Natural killer cell (primary cell): ENCODE measurements at regions of chr13 and their contacts with region 1.

Region 1: GRCh38 chr13:39612023-39612637 is 9.1 kb upstream of the LHFPL6 start:
- DNase-seq: peak in 1 of 2 donors; percentile 75
- ATAC-seq: peak in 1 of 3 donors; percentile 39
- H3K4me3 ChIP-seq: no peak overlapping the region
- H3K4me3 Mint-ChIP-seq: no peak overlapping the region
- H3K27ac ChIP-seq: no peak overlapping the region
- H3K27ac Mint-ChIP-seq: no peak overlapping the region
- H3K4me1 ChIP-seq: no peaks in the 10 kb centered on the region
- H3K4me1 Mint-ChIP-seq: no peaks in the 10 kb centered on the region
- H3K27me3 ChIP-seq: peaks cover 2% of the 10 kb centered on the region
- H3K27me3 Mint-ChIP-seq: peaks cover 3 to 7% of the 10 kb centered on the region in 2 donors
- CTCF ChIP-seq: peak; percentile 86

Region 2: DNA sequence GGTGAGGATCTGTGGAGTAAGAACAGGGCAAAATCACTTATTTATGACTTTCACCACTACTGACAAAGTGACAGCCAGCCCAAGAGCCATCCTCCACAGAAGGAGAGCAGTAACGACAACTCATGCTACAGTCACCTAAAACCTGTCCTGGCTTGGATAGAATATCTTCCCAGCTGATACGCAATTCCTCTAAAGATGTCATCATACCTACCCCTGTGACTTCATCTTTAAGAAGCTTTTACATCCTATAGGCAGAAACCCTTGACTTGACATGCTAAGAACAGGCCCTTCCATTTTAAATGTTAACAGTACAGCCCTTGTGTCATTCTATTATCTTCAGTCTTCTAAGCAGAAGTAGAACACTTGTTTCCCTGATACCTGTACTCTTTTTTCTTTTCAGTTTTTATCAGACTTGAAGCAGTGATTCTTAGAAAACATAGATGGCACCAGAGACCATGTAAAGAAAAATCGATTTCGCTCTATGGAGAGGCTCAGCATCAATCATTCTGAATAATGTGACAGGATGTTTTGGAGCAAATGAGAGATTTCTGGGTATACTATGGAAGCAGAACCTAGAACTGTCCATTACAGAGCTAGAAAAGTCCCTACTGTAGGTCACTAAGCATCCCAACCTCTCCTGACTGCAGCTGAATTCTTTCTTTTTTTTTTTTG is 641.6 kb before region 1 on chr13:
- intact Hi-C with region 1: loop called (anchors 5 kb)
- DNase-seq: peak in 1 of 2 donors; percentile 17
- ATAC-seq: no peak
- H3K4me3 ChIP-seq: no peak overlapping the region
- H3K4me3 Mint-ChIP-seq: no peak overlapping the region
- H3K27ac ChIP-seq: no peak overlapping the region
- H3K27ac Mint-ChIP-seq: no peak overlapping the region
- H3K4me1 ChIP-seq: no peaks in the 10 kb centered on the region
- H3K4me1 Mint-ChIP-seq: no peaks in the 10 kb centered on the region
- H3K27me3 ChIP-seq: no peaks in the 10 kb centered on the region
- H3K27me3 Mint-ChIP-seq: peaks cover 0 to 6% of the 10 kb centered on the region in 2 donors
- CTCF ChIP-seq: no peak

Region 3: DNA sequence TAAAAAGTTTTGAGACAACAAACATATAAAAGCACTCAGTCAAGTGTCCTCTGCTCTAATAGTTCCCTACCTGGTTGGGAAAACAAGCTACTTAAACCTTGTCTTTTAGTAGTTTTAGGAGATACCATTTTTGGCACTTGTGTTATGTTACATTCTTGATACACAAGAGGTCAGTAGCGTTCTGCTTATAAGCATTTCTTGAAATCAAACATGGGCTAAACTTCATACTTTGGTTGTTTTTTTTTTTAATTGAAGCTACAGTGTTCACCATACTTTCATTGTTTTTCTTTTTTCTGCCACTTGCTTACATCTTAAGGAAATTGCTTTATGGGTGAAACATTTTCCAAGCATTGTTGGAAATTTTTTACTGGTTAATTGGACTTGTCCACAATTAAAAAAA is 561.0 kb before region 1 on chr13:
- intact Hi-C with region 1: loop called (anchors 5 kb)
- DNase-seq: peak in 1 of 2 donors; percentile 54
- ATAC-seq: no peak
- H3K4me3 ChIP-seq: no peak overlapping the region
- H3K4me3 Mint-ChIP-seq: no peak overlapping the region
- H3K27ac ChIP-seq: no peak overlapping the region
- H3K27ac Mint-ChIP-seq: no peak overlapping the region
- H3K4me1 ChIP-seq: no peaks in the 10 kb centered on the region
- H3K4me1 Mint-ChIP-seq: peaks cover 14 to 15% of the 10 kb centered on the region in 2 donors
- H3K27me3 ChIP-seq: no peaks in the 10 kb centered on the region
- H3K27me3 Mint-ChIP-seq: no peaks in the 10 kb centered on the region
- CTCF ChIP-seq: no peak